Mammary epithelial cell (primary cell): ENCODE measurements at regions of chr1 and their contacts with region 1.

Region 1: DNA sequence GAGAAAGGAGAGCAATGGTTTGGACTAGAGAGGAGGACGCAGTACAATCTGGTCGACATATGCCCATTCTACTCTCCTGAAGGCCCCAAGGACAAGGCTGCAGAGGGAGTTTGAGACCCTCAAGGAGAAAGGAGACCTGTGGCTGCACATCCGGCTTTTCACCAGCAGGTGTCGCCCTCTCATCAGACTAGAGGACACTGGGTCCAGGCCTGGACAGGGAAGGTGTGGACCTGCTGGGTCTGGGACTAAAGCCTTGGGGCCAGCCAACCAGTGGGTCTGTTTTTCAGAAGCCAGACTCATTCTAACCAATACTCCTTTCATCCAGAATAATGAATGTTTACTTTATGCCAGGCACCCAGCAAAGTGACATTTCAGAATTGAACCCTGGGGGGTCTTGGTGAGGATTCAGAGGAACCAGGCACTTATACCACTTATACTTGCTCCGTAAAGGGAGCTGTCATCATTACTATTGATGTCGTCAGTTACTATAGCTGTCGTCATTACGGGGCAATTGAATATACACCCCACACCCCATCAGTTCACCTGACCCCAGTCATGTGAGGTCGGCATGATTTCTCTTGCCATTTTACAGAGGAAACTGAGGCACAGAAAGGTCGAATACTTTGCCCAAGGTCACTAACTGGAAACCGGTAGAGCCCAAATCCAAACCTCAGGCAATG is 5.1 kb downstream of the SRARP start:
- DNase-seq: peak; percentile 37
- H3K4me3 ChIP-seq: no peak overlapping the region
- H3K27ac ChIP-seq: no peak overlapping the region
- H3K4me1 ChIP-seq: peaks cover 19% of the 10 kb centered on the region
- H3K27me3 ChIP-seq: no peaks in the 10 kb centered on the region
- CTCF ChIP-seq: peak; percentile 92 to 97

Region 2: GRCh38 chr1:15598436-15598835 is 410.7 kb before region 1 on chr1:
- CTCF ChIA-PET with region 1: no interaction called
- dilution Hi-C with region 1: no loop called
- in situ Hi-C with region 1: no loop called
- intact Hi-C with region 1: loop called (anchors 10 kb)
- DNase-seq: no peak
- H3K4me3 ChIP-seq: no peak overlapping the region
- H3K27ac ChIP-seq: no peak overlapping the region
- H3K4me1 ChIP-seq: no peaks in the 10 kb centered on the region
- H3K27me3 ChIP-seq: no peaks in the 10 kb centered on the region
- CTCF ChIP-seq: no peak

Region 3: DNA sequence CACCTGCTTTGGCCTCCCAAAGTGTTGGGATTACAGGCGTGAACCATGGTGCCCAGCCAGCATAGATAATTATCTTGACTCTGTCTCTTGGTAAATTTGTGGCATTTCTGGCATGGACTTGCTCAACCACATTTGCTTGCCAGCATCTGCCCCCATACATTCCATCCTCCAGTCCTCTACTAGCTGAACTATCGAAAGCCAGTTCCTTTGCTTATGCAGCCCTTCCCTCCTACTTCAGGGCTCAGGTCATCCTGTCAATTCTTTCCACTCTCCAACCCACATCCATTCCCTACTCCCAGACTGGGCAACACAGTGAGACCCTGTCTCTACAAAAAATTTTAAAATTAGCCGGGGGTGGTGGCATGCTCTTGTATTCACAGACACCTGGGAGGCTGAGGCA is 188.7 kb before region 1 on chr1:
- CTCF ChIA-PET with region 1: interaction called, 4 read pairs
- dilution Hi-C with region 1: no loop called
- in situ Hi-C with region 1: no loop called
- intact Hi-C with region 1: loop called (anchors 1 kb)
- DNase-seq: peak; percentile 72
- H3K4me3 ChIP-seq: no peak overlapping the region
- H3K27ac ChIP-seq: no peak overlapping the region
- H3K4me1 ChIP-seq: peaks cover 12% of the 10 kb centered on the region
- H3K27me3 ChIP-seq: no peaks in the 10 kb centered on the region
- CTCF ChIP-seq: no peak

Region 4: DNA sequence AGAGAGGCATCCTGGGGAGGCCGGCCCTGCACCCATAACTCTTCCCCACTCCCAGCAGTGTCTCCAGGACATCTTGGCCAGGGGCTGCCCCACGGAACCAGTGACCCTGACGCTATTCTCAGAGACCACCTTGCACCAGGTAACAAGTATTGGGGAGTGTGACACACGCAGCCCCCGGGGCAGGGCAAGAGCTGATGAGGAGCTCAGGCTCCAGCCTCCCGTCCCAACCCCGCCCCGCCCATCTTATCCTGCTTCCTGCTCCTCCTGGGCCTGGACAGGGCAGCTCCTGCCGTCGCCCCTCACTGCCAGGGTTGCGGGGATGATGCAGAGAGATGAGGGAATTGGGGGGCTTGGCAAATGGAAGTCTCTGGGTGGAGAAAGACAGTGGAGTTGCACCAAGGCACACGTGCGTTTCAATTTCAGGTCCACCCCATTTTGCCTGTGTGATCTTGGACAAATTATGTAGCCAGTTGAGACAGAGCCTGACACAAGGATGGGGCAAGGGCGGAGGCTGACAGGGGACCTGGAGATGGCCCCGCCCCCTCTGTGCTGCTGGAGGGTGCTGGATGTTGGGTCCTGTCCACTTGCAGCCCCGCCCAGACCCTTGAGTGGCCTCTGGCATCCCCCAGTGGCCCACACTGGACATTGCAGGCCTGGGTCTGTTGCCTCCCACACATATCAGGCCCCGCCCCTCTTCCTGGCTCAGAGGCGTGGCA is 23.4 kb after region 1 on chr1:
- CTCF ChIA-PET with region 1: no interaction called
- dilution Hi-C with region 1: no loop called
- in situ Hi-C with region 1: no loop called
- intact Hi-C with region 1: loop called (anchors 2 kb)
- DNase-seq: peak; percentile 58
- H3K4me3 ChIP-seq: no peak overlapping the region
- H3K27ac ChIP-seq: no peak overlapping the region
- H3K4me1 ChIP-seq: peaks cover 6% of the 10 kb centered on the region
- H3K27me3 ChIP-seq: no peaks in the 10 kb centered on the region
- CTCF ChIP-seq: peak; percentile 86 to 97

Region 5: DNA sequence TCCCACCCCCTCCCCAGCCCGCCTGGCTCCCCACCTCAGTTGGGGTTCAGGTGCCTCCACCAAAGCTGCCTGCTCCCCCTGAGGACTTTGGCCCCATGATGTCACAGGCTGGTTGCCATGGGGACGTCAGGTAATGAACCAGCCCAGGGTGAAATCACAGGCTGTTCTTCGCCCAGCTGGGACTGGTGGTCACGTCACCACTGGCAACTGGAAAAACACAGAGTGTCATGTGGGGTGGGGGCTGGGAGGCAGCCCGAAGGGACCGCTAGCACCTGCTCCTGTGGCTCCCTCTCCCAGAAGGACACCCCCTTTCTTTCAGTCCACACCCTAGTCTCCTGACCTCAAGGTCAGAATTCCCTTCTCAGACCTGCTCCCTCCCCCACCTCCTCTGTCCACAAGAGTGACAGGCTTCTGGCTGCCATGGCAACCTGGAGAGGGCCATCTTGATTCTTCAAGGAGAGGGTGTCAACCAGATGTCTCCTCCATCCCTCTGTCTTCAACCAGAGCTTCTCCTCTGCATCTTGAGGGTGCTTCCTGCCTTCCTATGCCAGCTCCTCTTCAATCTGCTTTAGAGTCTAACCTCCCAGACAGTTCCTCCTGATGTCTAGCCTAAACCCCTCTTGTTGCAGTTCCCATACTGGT is 58.1 kb after region 1 on chr1:
- CTCF ChIA-PET with region 1: no interaction called
- dilution Hi-C with region 1: loop called (anchors 5 kb)
- in situ Hi-C with region 1: no loop called
- intact Hi-C with region 1: no loop called
- DNase-seq: peak; percentile 46
- H3K4me3 ChIP-seq: no peak overlapping the region
- H3K27ac ChIP-seq: no peak overlapping the region
- H3K4me1 ChIP-seq: no peaks in the 10 kb centered on the region
- H3K27me3 ChIP-seq: no peaks in the 10 kb centered on the region
- CTCF ChIP-seq: no peak

Region 6: DNA sequence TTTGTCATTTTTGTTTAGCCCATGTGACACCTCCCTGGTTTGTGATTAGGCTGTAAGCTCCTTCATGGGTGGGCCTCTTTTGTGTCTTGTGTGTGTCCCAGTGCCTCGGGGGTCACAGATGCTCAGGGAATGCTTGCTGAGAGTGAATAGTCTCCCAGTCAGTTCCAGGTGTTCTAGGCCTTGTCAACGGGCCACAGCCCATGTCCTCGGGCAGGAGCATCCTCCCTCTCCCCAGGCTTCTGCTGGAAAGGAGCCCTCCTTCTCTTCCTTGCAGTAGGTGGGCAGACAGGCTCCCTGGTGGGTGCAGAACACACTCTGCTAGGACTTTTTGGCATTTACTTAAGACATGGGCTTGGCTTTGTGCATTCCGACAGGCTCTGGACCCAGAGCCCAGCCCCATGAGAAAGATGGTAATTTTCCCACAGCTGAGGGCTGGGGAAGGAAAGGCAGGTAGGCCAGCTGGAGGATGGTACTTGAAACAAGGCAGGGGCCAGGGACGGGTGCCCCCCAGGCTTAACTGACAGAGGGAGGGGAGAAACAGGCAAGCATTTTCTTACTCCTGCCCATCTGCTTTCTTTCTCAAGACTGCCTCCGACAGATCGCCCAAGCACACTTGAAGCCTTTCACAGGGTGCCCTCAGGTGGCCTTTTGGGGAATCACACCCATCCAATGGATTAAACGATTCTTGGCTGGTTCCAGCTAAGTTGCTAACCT is 234.9 kb after region 1 on chr1:
- CTCF ChIA-PET with region 1: no interaction called
- dilution Hi-C with region 1: no loop called
- in situ Hi-C with region 1: no loop called
- intact Hi-C with region 1: loop called (anchors 2 kb)
- DNase-seq: peak; percentile 66
- H3K4me3 ChIP-seq: no peak overlapping the region
- H3K27ac ChIP-seq: no peak overlapping the region
- H3K4me1 ChIP-seq: peaks cover 12% of the 10 kb centered on the region
- H3K27me3 ChIP-seq: no peaks in the 10 kb centered on the region
- CTCF ChIP-seq: peak; percentile 86

Region 7: DNA sequence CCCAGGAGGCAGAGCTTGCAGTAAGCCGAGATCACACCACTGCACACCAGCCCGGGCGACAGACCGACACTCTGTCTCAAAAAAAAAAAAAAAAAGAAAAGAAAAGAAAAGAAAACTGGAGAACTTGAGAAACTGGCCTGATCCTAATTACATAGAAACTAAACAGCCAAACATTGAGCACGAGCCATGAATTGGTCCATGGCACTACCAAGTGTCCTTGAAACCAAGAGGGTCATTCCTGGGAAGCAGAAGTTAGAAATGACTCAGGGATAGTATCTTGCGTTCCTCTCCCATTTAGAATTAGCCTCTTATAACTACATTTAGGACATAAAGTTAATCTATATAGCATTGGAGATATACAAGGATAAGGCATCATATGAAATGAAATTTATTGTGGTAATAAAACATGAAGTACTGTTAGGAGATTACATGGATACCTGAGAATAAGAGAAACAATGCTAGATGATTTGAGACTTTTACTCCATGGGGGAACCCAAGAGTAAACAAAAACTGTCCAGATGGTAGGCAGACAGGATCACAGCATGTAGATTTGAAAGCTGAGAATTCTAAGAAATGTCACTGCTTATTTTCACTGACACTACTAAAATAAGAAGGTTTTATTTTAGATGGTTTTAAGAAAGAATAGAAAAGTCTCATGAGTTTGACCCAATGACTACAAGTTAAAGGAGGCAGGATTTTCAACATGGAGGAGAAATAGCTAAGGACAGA is 267.3 kb after region 1 on chr1:
- CTCF ChIA-PET with region 1: no interaction called
- dilution Hi-C with region 1: no loop called
- in situ Hi-C with region 1: no loop called
- intact Hi-C with region 1: no loop called
- DNase-seq: no peak
- H3K4me3 ChIP-seq: no peak overlapping the region
- H3K27ac ChIP-seq: no peak overlapping the region
- H3K4me1 ChIP-seq: no peaks in the 10 kb centered on the region
- H3K27me3 ChIP-seq: no peaks in the 10 kb centered on the region
- CTCF ChIP-seq: no peak

Region 8: DNA sequence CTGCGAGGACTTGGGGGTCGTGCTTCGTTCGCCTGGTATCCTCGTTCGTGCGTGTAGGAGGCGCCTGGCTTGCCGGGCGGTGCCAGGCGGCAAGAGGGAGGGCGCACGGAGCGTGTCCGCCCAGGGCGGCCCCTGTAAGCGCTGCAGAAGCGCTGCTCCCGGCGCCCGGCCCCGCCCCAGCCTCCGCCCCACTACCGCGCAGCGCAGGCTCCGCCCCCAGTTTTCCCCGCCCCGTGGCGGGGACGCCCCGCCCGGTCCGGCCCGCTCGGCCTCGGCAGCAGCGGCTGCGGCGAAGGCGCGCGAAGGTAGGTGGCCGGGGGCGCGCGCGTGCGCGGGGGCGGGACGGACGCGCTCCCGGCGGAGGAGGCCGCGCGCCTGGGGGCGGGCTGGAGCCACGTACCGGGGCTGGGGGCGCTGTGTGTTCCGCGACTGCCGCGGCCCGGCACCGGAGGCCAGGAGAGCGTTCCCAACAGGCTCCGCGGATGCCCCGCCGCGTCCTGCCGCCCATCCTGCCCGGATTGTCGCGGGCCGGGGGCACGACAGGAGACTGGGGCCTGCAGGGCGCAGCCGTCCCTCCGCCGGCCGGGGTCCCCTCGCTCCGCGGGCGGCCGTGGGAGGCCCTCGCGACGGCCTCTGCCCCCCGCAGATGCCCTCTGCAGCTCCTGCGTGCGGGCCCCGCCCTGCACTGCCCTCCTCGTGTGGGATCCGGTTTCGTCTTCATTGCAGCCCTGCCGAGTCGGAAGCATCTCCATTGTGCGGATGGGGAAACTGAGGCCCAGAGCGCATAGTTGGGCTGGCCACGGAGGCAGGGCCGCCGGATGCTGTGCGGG is 904.9 kb after region 1 on chr1:
- CTCF ChIA-PET with region 1: no interaction called
- dilution Hi-C with region 1: no loop called
- in situ Hi-C with region 1: no loop called
- intact Hi-C with region 1: loop called (anchors 5 kb)
- DNase-seq: peak; percentile 90
- H3K4me3 ChIP-seq: peak overlapping the region; percentile 28 to 78 (median 71)
- H3K27ac ChIP-seq: peak overlapping the region; percentile 22
- H3K4me1 ChIP-seq: peaks cover 9% of the 10 kb centered on the region
- H3K27me3 ChIP-seq: no peaks in the 10 kb centered on the region
- CTCF ChIP-seq: no peak